Ascending aorta (tissue), 2 donors: ENCODE measurements at regions of chr12 and their contacts with region 1.

Region 1: GRCh38 chr12:59041241-59042121 is 121.2 kb upstream of the LRIG3 start:
- DNase-seq: no peak
- H3K4me3 ChIP-seq: peak overlapping the region in 1 of 2 donors; percentile 23
- H3K27ac ChIP-seq: peak overlapping the region; percentile 65 to 75
- H3K4me1 ChIP-seq: peaks cover 0 to 12% of the 10 kb centered on the region in 2 donors
- H3K27me3 ChIP-seq: no peaks in the 10 kb centered on the region
- CTCF ChIP-seq: no peak

Region 2: GRCh38 chr12:58425481-58426392 is 615.7 kb before region 1 on chr12:
- intact Hi-C with region 1: loop called (anchors 10 kb)
- DNase-seq: no peak
- H3K4me3 ChIP-seq: no peak overlapping the region
- H3K27ac ChIP-seq: peak overlapping the region; percentile 61 to 73
- H3K4me1 ChIP-seq: peaks cover 0 to 16% of the 10 kb centered on the region in 2 donors
- H3K27me3 ChIP-seq: no peaks in the 10 kb centered on the region
- CTCF ChIP-seq: no peak

Region 3: GRCh38 chr12:59149997-59150642 is 108.6 kb after region 1 on chr12:
- intact Hi-C with region 1: loop called (anchors 5 kb)
- DNase-seq: no peak
- H3K4me3 ChIP-seq: no peak overlapping the region
- H3K27ac ChIP-seq: no peak overlapping the region
- H3K4me1 ChIP-seq: peaks cover 0 to 8% of the 10 kb centered on the region in 2 donors
- H3K27me3 ChIP-seq: no peaks in the 10 kb centered on the region
- CTCF ChIP-seq: peak; percentile 88 to 94 (median 93)